ENCODE measurements at regions of chr20 and their contacts with region 1.

Region 1: DNA sequence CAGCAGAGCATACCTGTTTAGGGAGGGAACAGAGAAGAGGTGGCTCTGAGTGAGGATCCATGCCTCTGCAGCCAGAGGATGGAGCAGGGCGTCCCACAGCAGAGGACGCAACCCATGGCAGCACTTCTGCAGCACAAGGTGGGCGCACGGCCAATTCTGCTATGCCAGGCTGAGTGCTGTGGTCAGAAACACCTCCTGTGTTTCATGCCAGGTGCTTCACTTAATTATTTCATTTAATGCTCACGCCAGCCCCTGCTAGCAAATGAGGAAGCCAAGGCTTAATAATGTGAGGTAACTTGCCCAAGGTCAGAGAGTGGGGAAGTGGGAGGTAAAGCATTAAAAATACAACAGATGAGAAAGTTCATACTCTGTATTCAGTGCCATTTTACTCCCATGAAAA is 68.5 kb upstream of the PTGIS start:
- DNase-seq: peak; percentile 79
- H3K4me3 ChIP-seq: no peak overlapping the region
- H3K27ac ChIP-seq: peak overlapping the region in 3 of 4 donors; percentile 74 to 81 (median 79)
- H3K4me1 ChIP-seq: peaks cover 0 to 57% (median 34%) of the 10 kb centered on the region in 4 donors
- H3K27me3 ChIP-seq: no peaks in the 10 kb centered on the region
- CTCF ChIP-seq: no peak
- EP300 ChIP-seq: no peak
- POLR2A ChIP-seq: no peak

Region 2: GRCh38 chr20:49713753-49714712 is 77.6 kb after region 1 on chr20 and contains the start of gene B4GALT5:
- intact Hi-C with region 1: loop called (anchors 2 kb)
- DNase-seq: peak; percentile 82
- H3K4me3 ChIP-seq: peak within 1 kb of the TSS; percentile 80 to 98 (median 90)
- H3K27ac ChIP-seq: peak within 1 kb of the TSS; percentile 84 to 98 (median 94)
- H3K4me1 ChIP-seq: peaks cover 0 to 42% (median 32%) of the 10 kb centered on the region in 4 donors
- H3K27me3 ChIP-seq: no peaks in the 10 kb centered on the region
- CTCF ChIP-seq: no peak
- EP300 ChIP-seq: no peak
- POLR2A ChIP-seq: no peak
- total RNA-seq, gene B4GALT5: 17.4 to 33.4 (median 21.5) TPM